Activated CD4-positive, alpha-beta T cell treated with anti-CD3 and anti-CD28 coated beads for 36 hours (primary cell): ENCODE measurements at regions of chr1 and their contacts with region 1.

Region 1: DNA sequence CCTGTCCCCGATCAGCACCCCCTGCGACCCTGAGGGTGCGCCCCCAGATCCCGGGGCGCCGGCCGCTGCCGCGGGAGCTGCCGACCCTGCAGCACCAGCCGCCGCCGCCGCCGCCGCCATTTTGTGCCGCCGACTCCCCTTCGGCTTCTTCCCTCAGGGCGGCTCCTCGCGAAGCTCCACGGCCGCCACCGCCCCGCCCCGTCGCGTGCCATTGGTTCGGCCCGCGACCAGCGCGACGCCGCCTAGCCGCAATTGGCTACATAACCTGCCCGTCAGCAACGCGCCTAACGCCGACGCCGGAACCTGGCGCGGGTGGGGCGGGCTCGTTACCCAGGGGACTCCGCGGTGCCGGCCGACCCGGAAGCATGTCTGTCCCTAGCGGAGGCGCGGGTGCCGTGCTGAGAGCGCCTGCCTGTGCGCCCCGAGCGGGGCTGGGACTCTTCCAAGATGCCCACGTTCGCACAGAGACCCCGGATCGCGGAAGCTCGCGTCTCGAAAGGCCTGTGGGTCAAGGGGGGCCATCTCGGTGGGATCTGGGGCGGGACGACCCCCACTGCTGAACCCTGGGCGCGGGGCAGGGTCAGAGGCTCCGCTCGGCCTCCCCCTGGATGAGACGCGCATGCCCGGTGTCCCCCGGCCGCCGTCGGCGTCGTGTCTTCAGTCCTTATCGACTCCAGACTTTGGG is at the start of gene CCNL2:
- DNase-seq: peak; percentile 100
- ATAC-seq: peak; percentile 97
- H3K4me3 Mint-ChIP-seq: peak within 1 kb of the TSS; percentile 93
- H3K27ac Mint-ChIP-seq: peak within 1 kb of the TSS; percentile 91
- H3K4me1 Mint-ChIP-seq: peaks cover 52% of the 10 kb centered on the region
- H3K27me3 Mint-ChIP-seq: no peaks in the 10 kb centered on the region
- total RNA-seq, gene CCNL2: 73.6 to 89.7 TPM

Region 2: GRCh38 chr1:1246577-1247340 is 152.6 kb before region 1 on chr1 and contains the start of gene C1QTNF12:
- CTCF ChIA-PET with region 1: no interaction called
- POLR2A ChIA-PET with region 1: no interaction called
- intact Hi-C with region 1: no loop called
- DNase-seq: no peak
- ATAC-seq: no peak
- H3K4me3 Mint-ChIP-seq: no peak within 1 kb of the TSS
- H3K27ac Mint-ChIP-seq: no peak within 1 kb of the TSS
- H3K4me1 Mint-ChIP-seq: peaks cover 15% of the 10 kb centered on the region
- H3K27me3 Mint-ChIP-seq: peaks cover 4% of the 10 kb centered on the region
- total RNA-seq, gene C1QTNF12: 1.1 to 1.6 TPM

Region 3: GRCh38 chr1:1435106-1435903 is 36.0 kb after region 1 on chr1 and contains the start of gene VWA1:
- CTCF ChIA-PET with region 1: interaction called, 3 read pairs
- POLR2A ChIA-PET with region 1: no interaction called
- intact Hi-C with region 1: loop called in 1 of 2 experiments (anchors 2 kb)
- DNase-seq: peak; percentile 82
- ATAC-seq: peak; percentile 68
- H3K4me3 Mint-ChIP-seq: peak within 1 kb of the TSS; percentile 45
- H3K27ac Mint-ChIP-seq: no peak within 1 kb of the TSS
- H3K4me1 Mint-ChIP-seq: peaks cover 10% of the 10 kb centered on the region
- H3K27me3 Mint-ChIP-seq: peaks cover 14% of the 10 kb centered on the region
- total RNA-seq, gene VWA1: 0.56 to 0.78 TPM

Region 4: DNA sequence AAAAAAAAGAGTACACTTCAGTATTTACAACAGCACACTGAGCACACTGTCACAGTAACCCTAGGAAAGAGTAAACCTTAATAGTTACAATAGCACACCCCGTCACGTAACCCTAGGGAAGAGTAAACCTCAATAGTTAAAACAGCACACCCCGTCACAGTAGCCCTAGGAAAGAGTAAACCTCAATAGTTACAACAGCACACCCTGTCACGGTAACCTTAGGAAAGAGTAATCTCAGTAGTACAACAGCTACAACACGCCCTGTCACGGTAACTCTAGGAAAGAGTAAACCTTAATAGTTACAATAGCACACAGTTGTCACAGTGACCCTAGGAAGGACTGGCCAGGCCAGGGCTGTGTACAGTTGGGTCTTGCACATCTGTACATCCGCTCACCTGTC is 321.9 kb after region 1 on chr1:
- CTCF ChIA-PET with region 1: no interaction called
- POLR2A ChIA-PET with region 1: no interaction called
- intact Hi-C with region 1: loop called in 1 of 2 experiments (anchors 1 kb)
- DNase-seq: no peak
- ATAC-seq: no peak
- H3K4me3 Mint-ChIP-seq: no peak overlapping the region
- H3K27ac Mint-ChIP-seq: peak overlapping the region; percentile 60
- H3K4me1 Mint-ChIP-seq: peaks cover 5% of the 10 kb centered on the region
- H3K27me3 Mint-ChIP-seq: no peaks in the 10 kb centered on the region

Region 5: DNA sequence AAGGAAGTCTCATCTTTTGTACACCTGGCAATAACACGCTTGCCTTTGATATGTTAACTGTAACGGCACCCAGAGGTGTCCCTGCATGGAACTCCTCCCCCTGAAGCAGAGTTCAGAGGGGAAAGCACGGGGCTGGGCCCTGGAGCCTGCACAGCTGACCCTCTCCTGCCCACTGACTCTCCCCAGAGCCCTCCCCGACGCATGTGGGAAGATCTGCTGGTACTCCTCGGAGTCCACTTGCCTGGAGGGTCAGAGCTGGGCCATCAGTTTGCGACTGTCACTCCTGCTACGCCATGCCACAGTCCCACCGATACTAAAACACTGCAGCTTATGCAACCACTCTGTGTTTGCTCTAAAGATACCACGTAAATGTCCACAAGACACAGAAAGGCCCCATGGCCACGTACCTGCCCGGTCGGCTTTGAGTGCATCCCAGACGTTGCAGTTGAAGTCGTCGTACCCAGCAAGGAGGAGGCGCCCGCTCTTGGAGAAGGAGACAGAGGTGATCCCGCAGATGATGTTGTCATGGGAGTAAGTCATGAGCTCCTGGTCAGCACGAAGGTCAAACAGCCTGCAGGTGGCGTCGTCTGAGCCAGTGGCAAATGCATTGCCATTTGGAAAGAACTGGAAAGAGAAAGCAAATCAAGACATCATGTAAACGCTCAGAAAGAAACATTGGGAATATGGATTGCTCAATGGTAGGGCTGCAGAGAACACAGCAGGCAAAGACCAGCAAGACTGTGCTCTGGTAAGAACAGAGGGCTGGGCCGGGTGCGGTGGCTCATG is 389.5 kb after region 1 on chr1:
- CTCF ChIA-PET with region 1: no interaction called
- POLR2A ChIA-PET with region 1: no interaction called
- intact Hi-C with region 1: no loop called
- DNase-seq: peak; percentile 56
- ATAC-seq: no peak
- H3K4me3 Mint-ChIP-seq: no peak overlapping the region
- H3K27ac Mint-ChIP-seq: no peak overlapping the region
- H3K4me1 Mint-ChIP-seq: no peaks in the 10 kb centered on the region
- H3K27me3 Mint-ChIP-seq: no peaks in the 10 kb centered on the region